ENCODE measurements at regions of chr20 and their contacts with region 1.

Region 1: DNA sequence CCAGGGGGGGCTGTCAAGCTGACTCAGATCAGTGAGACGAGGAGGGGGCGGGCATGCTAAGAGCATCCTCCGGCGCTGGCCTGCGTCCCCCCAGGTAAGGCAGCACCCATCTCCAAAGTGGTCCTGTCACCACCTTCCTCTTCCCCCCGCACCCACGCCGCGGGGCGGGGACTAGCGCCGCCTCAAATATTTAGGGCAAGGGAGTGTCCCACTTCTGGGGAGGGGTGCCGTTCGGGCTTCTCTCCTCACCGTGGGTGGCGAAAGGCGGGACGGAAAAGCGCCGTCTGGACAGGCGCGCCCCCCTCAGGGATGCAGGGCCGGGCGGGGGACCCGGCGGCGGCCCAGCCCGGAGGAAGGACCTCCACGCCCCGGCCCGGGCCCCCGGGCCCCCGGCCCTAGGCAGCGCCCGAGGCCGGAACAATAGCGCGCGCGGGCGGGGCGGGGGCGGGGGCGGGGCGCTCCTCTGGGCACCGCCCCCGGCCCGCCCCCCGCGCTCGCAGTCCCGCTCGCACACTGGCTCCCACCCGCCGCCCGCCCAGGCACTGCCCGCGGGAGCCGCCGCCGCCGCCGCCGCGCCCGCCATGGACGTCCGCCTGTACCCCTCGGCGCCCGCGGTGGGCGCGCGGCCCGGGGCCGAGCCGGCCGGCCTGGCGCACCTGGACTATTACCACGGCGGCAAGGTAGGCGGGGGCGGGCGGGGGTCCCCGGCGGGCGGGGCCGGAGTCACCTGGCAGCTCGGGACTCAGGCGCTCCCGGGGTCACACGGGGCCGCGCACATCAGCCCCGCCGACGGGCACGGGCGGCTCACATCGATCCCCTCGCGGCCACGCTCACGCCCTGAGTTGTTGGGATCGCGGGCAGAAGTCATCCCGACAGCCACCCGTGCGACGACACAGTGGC is at the start of gene TOX2:
- DNase-seq: no peak
- H3K4me3 ChIP-seq: peak within 1 kb of the TSS in 2 of 3 experiments; percentile 47 to 48
- H3K27ac ChIP-seq: no peak within 1 kb of the TSS
- H3K4me1 ChIP-seq: peaks cover 16% of the 10 kb centered on the region
- H3K27me3 ChIP-seq: peaks cover 15% of the 10 kb centered on the region
- CTCF ChIP-seq: no peak
- total RNA-seq, gene TOX2: 0.83 to 5.0 TPM

Region 2: DNA sequence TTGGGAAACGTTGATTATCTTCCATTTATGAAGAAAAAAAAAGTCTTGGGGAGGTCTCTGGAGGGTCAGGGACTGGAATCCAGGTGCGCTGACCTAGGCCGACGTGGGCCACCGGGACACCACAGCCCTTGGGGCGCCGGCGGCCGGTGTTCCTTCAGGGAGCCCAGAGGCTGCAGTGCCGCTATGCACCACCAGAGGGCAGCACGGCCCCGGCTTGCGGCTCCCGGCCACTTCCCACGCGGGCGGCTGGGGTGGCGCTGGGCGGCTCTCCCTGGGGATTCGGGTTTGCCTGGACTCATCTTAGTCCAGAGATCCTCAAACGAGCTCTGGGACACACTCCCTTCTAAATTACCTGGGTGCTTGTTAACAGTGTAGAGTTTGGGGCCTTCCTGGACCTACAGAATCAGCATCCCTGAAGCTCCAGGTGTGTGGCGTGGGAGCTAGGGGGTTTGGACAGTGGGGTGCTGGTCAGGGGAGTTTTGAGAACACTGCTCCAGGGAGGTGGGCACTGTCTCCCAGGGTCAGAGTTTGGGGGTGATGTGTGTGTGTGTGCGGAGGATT is 164.7 kb before region 1 on chr20:
- CTCF ChIA-PET with region 1: interaction called, 5 read pairs
- dilution Hi-C with region 1: no loop called
- in situ Hi-C with region 1: no loop called
- intact Hi-C with region 1: loop called (anchors 2 kb)
- DNase-seq: peak; percentile 57
- H3K4me3 ChIP-seq: no peak overlapping the region
- H3K27ac ChIP-seq: no peak overlapping the region
- H3K4me1 ChIP-seq: peaks cover 22% of the 10 kb centered on the region
- H3K27me3 ChIP-seq: no peaks in the 10 kb centered on the region
- CTCF ChIP-seq: peak; percentile 85 to 99

Region 3: GRCh38 chr20:43942661-43943290 is 28.2 kb after region 1 on chr20:
- CTCF ChIA-PET with region 1: no interaction called
- dilution Hi-C with region 1: no loop called
- in situ Hi-C with region 1: no loop called
- intact Hi-C with region 1: no loop called
- DNase-seq: peak; percentile 56
- H3K4me3 ChIP-seq: no peak overlapping the region
- H3K27ac ChIP-seq: no peak overlapping the region
- H3K4me1 ChIP-seq: peaks cover 46% of the 10 kb centered on the region
- H3K27me3 ChIP-seq: no peaks in the 10 kb centered on the region
- CTCF ChIP-seq: no peak

Region 4: DNA sequence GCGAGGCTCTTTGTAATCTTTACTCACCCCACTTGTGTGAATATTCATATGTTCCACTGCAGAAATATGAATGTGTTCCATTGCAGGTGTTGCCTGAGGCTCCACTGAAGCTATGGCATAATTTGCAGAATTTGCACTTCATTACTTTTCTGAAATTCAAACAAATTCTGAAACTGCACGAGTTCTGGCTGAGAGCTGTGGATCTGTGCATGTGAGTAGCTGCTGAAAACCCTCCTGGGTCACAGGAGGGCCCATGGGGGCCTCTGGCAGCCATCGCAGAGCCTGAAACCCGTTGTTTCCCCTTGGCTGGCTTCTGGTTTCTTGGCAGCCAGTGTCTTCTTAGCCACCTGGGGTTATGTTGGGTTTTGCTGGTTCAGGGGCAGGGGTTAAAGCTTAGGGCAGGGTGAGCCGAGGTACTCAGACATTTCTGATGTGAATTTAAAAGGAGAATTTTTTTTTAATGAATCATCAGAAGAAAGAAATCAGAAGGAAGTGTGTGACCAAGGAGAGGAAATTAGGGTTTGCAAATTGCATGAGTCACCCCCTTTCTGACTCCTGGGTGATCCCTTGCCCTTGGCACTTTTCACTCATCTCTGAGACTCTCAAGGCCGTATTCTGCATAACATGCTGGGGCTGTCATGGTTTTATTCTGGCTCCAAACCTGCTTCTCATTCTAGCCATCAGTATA is 40.6 kb after region 1 on chr20:
- CTCF ChIA-PET with region 1: no interaction called
- dilution Hi-C with region 1: no loop called
- in situ Hi-C with region 1: no loop called
- intact Hi-C with region 1: loop called (anchors 2 kb)
- DNase-seq: peak; percentile 89
- H3K4me3 ChIP-seq: no peak overlapping the region
- H3K27ac ChIP-seq: peak overlapping the region; percentile 40
- H3K4me1 ChIP-seq: peaks cover 36% of the 10 kb centered on the region
- H3K27me3 ChIP-seq: no peaks in the 10 kb centered on the region
- CTCF ChIP-seq: no peak

Measured in mammary epithelial cell (primary cell).